PC-9 (cell line): ENCODE measurements at regions of chr18 and their contacts with region 1.

Region 1: GRCh38 chr18:9474983-9475642 is at the start of gene RALBP1:
- DNase-seq: peak; percentile 96 to 100
- H3K4me3 ChIP-seq: peak within 1 kb of the TSS; percentile 68
- H3K27ac ChIP-seq: peak within 1 kb of the TSS; percentile 94
- H3K4me1 ChIP-seq: peaks cover 23% of the 10 kb centered on the region
- H3K27me3 ChIP-seq: no peaks in the 10 kb centered on the region
- CTCF ChIP-seq: no peak; the same call in 1 of the 2 replicates
- total RNA-seq, gene RALBP1: 91.3 and 95.0 TPM in 2 replicates

Region 2: DNA sequence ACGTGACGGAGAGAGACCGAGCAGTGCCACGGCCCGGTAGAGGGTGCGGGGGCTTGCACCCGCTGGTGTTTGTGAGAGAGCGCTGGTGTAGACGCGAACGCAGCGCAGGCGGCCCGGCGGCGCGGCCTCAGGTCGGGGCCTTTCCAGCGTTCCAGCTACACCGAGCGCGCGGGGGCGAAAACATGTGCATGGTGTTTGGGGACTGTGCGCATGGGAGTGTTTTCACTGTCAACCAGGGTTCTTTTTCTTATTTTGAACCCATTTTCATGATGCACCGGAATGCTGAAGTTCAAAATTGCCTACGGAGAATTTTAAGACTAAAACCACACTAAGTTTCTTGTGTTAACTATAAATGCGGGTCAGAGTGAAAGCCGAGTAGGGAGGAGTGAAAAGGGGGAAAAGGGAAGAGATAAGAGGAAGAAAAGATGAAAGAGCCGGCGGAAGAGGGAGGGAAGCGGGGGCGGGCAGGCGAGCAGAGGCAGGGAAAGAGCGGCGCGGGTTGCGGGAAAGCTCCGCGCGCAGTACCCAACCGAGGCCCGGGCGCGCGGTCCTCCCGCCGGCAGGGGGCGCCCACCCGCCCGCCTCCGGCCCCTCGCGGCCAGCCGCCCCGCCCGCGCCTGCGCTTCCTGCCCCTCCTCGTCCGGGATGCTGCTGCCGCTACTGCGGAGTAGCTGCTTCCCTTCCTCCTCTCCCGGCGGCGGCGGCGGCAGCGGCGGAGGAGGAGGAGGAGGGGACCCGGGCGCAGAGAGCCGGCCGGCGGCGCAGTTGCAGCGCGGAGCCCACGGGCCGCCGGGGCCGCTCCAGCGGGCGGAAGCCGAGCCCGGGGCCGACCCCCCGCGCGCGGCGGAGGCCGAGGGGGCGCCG is 866.1 kb before region 1 on chr18 and contains the start of gene RAB12:
- CTCF ChIA-PET with region 1: interaction called, 21 read pairs
- POLR2A ChIA-PET with region 1: no interaction called
- intact Hi-C with region 1: no loop called
- DNase-seq: peak; percentile 50 to 86
- H3K4me3 ChIP-seq: peak within 1 kb of the TSS; percentile 98
- H3K27ac ChIP-seq: peak within 1 kb of the TSS; percentile 79; the same call in 1 of the 2 replicates
- H3K4me1 ChIP-seq: peaks cover 41% of the 10 kb centered on the region
- H3K27me3 ChIP-seq: no peaks in the 10 kb centered on the region
- CTCF ChIP-seq: peak; percentile 58
- total RNA-seq, gene RAB12: 60.1 and 79.4 TPM in 2 replicates

Region 3: GRCh38 chr18:9366192-9366591 is 108.9 kb before region 1 on chr18:
- CTCF ChIA-PET with region 1: interaction called, 3 read pairs
- POLR2A ChIA-PET with region 1: interaction called, 5 read pairs
- intact Hi-C with region 1: loop called (anchors 1 kb)
- DNase-seq: peak in 1 of 2 experiments; percentile 71
- H3K4me3 ChIP-seq: no peak overlapping the region
- H3K27ac ChIP-seq: no peak overlapping the region
- H3K4me1 ChIP-seq: peaks cover 40% of the 10 kb centered on the region
- H3K27me3 ChIP-seq: no peaks in the 10 kb centered on the region
- CTCF ChIP-seq: no peak

Region 4: DNA sequence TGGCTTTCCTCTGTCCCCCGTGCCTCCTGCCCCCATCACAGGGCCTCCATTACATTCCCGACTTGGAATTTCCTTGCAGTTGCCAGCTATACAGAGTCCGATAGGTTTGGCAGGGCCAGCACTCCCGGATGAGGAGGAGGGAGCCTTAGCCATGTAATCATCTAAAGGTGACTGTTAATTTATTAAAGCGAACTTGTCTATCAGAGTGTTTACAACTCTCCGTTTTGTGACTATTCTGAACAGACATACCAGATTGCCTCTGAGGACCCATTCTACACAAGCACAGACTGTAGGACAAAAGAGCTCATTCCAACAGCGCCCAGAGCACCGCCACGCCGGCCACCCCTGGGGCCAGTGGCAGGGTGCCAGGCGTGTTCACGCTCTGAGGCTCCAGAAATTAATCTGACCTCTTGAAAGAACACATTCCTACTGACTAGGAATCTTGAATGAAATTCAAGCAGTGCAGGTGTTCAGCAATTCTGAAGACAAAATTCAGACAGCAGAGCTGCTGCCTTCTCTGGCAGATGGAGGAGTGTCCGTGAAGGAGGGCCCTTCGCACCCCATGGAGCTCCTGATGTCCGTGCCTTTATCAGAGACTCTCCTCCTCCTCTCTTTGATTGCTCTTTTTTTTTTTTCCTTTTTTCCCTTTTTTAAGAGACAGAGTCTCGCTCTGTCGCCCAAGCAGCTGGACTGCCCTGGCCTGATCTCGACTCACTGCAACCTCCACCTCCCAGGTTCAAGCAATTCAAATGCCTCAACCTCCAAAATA is 57.9 kb before region 1 on chr18:
- CTCF ChIA-PET with region 1: interaction called, 5 read pairs
- POLR2A ChIA-PET with region 1: interaction called, 4 read pairs
- intact Hi-C with region 1: loop called (anchors 1 kb)
- DNase-seq: peak in 1 of 2 experiments; percentile 92
- H3K4me3 ChIP-seq: no peak overlapping the region
- H3K27ac ChIP-seq: no peak overlapping the region
- H3K4me1 ChIP-seq: peaks cover 9% of the 10 kb centered on the region
- H3K27me3 ChIP-seq: no peaks in the 10 kb centered on the region
- CTCF ChIP-seq: no peak

Region 5: DNA sequence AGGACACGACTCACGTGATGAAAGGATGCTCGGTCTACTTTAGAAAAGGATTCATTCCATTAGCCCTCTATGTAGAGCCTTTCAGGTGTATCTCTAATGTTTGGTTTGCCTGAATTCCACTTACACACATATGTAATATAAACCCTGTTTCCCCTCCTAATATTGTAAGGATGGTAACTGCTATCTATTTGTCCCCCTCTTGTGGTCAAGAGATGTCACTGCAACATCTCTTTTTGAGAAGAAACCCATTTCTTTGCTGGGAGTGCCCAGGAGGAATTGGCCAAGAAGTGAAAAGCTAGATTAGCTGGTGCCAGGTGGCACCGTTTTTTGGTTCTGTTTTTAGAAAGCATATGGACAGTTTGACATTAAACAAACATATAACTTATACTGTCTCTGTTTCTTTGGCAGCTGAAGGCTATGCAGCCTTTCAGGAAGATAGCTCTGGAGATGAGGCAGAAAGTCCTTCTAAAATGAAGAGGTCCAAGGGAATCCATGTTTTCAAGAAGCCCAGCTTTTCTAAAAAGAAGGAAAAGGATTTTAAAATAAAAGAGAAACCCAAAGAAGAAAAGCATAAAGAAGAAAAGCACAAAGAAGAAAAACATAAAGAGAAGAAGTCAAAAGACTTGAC is 41.4 kb after region 1 on chr18:
- CTCF ChIA-PET with region 1: interaction called, 3 read pairs
- POLR2A ChIA-PET with region 1: interaction called, 11 read pairs
- intact Hi-C with region 1: loop called (anchors 2 kb)
- DNase-seq: no peak
- H3K4me3 ChIP-seq: no peak overlapping the region
- H3K27ac ChIP-seq: no peak overlapping the region
- H3K4me1 ChIP-seq: peaks cover 29% of the 10 kb centered on the region
- H3K27me3 ChIP-seq: no peaks in the 10 kb centered on the region
- CTCF ChIP-seq: peak; percentile 90

Region 6: GRCh38 chr18:9549405-9549804 is 74.3 kb after region 1 on chr18:
- CTCF ChIA-PET with region 1: no interaction called
- POLR2A ChIA-PET with region 1: no interaction called
- intact Hi-C with region 1: no loop called
- DNase-seq: no peak
- H3K4me3 ChIP-seq: no peak overlapping the region
- H3K27ac ChIP-seq: no peak overlapping the region
- H3K4me1 ChIP-seq: no peaks in the 10 kb centered on the region
- H3K27me3 ChIP-seq: no peaks in the 10 kb centered on the region
- CTCF ChIP-seq: 0 out of 2 replicates have a peak, but pooled peaks have one; percentile 15

Region 7: DNA sequence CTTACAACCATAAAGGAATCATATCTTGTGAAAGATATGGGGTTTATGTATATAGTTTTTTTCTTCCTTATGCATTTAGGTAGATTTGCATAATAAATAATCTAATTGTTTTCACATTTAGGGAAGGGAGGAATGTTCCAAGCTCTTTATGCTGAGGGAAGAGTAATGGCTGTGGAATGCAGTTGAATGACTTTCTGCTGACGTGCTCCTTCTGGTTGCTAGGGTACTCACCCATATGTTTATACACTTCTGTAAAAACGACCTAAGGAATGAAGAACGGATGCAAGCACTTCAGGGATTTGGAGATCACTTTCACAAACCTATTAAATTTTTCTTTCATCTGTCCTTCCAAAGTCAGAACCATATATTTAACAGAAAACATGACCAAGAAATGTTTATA is 168.4 kb after region 1 on chr18:
- CTCF ChIA-PET with region 1: no interaction called
- POLR2A ChIA-PET with region 1: no interaction called
- intact Hi-C with region 1: loop called (anchors 5 kb)
- DNase-seq: peak; percentile 74 to 97
- H3K4me3 ChIP-seq: peak overlapping the region; percentile 13; the same call in 1 of the 2 replicates
- H3K27ac ChIP-seq: peak overlapping the region; percentile 84
- H3K4me1 ChIP-seq: peaks cover 52% of the 10 kb centered on the region
- H3K27me3 ChIP-seq: no peaks in the 10 kb centered on the region
- CTCF ChIP-seq: no peak